GM10248 (cell line): ENCODE measurements at regions of chr5 and their contacts with region 1.

Region 1: DNA sequence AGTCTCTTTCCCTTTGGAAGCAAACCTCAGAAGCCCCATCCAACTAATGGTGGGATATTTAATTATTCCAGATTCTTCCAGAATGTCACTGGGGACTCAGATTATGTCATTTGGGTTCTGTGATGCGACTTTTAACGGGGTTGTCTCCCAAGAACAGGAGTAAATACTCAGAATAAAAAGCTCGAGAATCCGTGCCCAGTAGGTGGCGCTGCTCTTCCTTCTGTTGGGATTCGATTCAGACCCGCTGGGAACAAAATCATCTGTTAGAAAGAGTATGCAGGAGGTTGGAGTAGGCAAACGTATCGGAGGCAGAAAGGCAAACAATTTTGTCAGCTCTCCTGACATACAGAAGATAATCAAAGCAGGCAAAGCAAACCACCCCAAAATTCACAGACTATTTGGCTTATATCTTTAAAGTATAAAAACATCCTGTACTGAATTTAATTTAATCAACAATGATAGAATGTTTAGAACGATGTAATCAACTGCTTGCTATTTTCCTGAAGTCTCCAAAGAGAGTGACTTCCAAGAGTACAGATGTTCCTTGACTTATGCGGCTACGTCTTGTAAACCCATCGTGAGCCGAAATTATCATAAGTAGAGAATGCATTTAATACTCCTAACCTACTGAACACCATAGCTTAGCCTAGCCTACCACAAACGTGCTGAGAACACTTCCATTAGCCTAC is 169.8 kb upstream of the RAI14 start:
- DNase-seq: peak; percentile 65
- CTCF ChIP-seq: peak; percentile 87

Region 2: GRCh38 chr5:34460496-34460895 is 25.8 kb before region 1 on chr5:
- CTCF ChIA-PET with region 1: no interaction called
- POLR2A ChIA-PET with region 1: no interaction called
- DNase-seq: no peak
- CTCF ChIP-seq: no peak

Region 3: DNA sequence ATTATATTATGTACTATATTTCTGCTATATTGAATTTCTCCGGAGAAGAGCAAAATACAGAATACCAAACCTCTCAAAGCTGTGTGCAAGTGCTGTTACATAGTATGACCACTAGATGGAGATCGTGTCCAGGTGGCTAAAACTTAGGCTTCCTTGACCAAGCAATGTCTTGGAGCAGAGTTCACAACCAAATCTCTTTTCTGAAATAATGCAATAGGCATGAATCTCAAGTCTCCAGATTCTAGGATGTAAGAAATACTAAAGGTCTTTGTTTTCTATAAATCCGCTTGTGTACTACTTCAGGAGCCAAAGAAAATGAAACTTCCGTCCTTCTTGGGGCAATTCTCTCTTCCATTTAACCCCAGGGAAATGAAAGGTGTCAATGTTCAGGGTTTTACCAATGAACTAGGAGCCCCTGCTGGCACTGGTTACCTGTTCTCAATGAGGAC is 11.7 kb before region 1 on chr5:
- CTCF ChIA-PET with region 1: interaction called, 45 read pairs
- POLR2A ChIA-PET with region 1: no interaction called
- DNase-seq: peak; percentile 58
- CTCF ChIP-seq: peak; percentile 91

Region 4: DNA sequence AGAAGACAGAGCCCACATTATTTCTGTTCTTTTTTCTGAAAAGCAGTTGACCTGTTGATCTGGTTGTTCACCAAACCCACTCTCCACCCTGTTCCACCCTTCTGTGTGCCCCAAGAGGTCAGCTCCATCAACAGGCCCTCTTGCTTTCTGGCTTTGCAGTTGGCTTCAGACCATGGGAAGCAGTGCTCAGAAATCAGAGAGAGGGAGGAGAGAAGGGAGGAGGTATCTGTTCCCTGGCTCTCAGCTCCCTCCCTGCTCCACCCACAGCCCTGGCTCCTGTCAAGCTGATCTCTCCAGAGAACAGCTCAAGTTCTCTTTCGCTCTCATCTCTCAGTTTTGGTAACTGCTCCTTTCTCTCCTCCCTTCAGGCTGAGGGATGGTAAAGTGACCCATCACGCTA is 25.6 kb after region 1 on chr5:
- CTCF ChIA-PET with region 1: interaction called, 32 read pairs
- POLR2A ChIA-PET with region 1: no interaction called
- DNase-seq: no peak
- CTCF ChIP-seq: no peak

Region 5: GRCh38 chr5:34533582-34534522 is 47.5 kb after region 1 on chr5:
- CTCF ChIA-PET with region 1: interaction called, 18 read pairs
- POLR2A ChIA-PET with region 1: no interaction called
- DNase-seq: no peak
- CTCF ChIP-seq: no peak

Region 6: DNA sequence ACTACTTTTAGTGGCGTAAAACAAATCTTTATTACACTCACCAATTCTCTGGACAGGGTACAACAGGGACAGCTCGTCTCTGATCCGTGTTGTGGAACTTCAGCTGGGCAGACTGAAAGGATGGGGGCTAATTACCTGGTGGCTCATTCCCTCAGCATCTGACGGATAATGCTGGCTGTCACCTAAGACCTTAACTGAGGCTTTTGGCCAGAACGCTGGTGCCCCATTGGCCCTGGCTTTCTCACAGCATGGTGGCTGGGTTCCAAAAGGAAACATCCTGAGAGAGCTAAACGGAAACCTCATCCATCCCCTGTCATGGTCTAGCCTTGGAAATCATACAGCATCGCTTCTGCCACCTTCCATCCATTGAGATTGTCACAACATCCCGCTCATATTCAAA is 232.7 kb after region 1 on chr5:
- CTCF ChIA-PET with region 1: no interaction called
- POLR2A ChIA-PET with region 1: no interaction called
- DNase-seq: no peak
- CTCF ChIP-seq: no peak

Region 7: DNA sequence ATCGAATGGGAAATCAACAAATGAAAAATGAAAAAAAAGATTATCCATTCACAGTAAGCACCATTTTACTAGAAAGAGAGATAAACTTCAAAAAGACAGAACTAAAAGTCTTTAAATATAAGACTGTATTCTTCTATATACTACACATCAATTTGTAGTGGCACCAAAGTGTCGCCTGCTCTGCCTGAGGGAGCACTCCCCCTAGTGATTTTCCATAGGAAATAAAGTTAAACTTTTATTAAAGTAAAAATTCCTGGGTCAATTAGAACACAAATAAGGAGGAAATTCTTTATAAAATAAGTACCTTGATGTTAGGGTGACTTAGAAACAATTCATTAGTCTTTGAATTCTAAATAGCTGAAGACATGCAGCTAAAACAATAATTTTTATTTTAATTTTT is 419.3 kb after region 1 on chr5:
- CTCF ChIA-PET with region 1: interaction called, 104 read pairs
- POLR2A ChIA-PET with region 1: no interaction called
- DNase-seq: no peak
- CTCF ChIP-seq: peak; percentile 15

Region 8: DNA sequence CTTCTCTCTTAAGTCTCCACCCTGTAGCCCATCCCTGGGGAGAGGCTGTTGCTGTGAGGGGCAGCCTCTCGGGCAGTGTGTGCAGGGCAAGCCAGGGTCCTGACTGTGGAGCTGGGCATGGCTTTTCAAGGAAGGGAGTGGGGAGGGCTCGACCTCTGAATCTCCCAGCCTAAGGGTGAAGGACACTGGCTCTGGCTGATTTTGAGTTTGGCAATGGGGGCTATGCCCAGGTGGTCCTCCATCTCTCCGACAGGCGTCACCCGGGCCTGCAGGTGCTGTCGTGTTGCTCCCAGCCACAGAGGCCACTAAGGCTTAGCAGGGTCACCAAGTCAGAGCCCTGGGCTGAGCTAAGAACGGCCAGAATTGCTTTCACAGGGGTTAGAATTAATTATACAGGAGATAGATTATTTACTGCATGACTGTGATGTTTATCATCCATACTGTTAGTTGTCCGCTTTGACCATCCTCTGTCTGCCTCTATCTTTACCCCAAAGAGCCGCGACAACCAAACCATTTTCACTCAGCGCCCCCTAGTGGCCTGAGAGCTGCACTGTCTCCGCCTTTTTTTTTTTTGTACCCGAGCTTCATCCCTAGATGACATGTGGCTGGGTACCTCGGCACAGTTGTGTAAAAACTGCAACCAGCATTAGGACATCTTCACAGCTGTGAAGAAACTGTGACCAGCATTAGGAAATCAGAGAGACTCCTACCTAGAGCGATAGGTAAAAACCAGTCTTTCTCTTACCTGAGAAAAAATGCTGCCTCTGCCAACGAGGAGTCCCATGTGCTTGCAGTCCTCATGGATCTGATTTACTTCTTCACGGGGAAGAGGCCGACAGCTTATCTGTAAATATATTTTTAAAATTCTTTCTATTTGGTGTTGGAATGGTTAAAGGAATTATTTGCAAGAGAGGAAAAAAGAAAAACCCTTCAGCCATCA is 517.0 kb after region 1 on chr5:
- CTCF ChIA-PET with region 1: interaction called, 18 read pairs
- POLR2A ChIA-PET with region 1: no interaction called
- DNase-seq: peak; percentile 79
- CTCF ChIP-seq: peak; percentile 72